ENCODE measurements at regions of chr12 and their contacts with region 1.

Region 1: DNA sequence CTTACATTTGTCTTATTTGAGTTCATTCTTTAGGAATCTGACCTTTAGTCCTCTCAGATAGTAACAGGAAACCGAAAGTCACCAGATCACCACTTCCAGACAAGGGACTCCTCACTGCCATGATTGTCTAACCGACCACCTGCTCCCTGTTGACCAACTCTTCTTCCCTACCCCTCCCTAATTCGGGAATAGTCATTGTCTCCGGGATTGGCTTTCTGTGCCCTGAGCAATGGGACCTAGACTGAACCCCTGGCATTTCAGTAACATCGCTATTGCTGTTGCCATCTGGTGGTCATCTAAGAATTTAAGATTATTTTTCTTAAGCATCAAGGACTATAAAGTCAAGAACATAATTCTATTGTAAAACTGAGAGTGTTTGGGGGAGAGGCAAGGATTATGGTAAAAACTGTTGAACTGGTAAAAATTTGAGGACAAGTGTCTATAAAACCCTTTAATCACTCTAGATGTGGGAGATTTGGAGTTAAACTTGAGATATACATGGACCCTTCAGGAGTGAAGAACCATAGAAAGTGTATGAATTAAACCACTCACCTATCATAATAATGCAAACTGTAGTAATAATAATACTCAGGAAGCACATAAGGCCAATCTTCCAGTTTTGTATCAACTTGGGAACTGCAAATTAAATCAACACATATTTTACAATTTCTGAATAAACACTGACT is 6.3 kb downstream of the CLEC2A start:
- DNase-seq: peak; percentile 69
- ATAC-seq: peak; percentile 47
- H3K4me3 ChIP-seq: peak overlapping the region in 3 of 5 experiments; percentile 18 to 22 (median 21)
- H3K4me3 Mint-ChIP-seq: peak overlapping the region; percentile 56
- H3K27ac ChIP-seq: no peak overlapping the region
- H3K27ac Mint-ChIP-seq: no peak overlapping the region
- H3K4me1 ChIP-seq: no peaks in the 10 kb centered on the region
- H3K4me1 Mint-ChIP-seq: peaks cover 3% of the 10 kb centered on the region
- H3K27me3 ChIP-seq: peaks cover 0 to 4% (median 0%) of the 10 kb centered on the region in 4 experiments
- H3K27me3 Mint-ChIP-seq: peaks cover 21% of the 10 kb centered on the region
- CTCF ChIP-seq: peak; percentile 68

Region 2: GRCh38 chr12:9331218-9331626 is 594.6 kb before region 1 on chr12:
- CTCF ChIA-PET with region 1: interaction called, 3 read pairs
- POLR2A ChIA-PET with region 1: no interaction called
- intact Hi-C with region 1: loop called (anchors 1 kb)
- DNase-seq: peak; percentile 74
- ATAC-seq: peak; percentile 84
- H3K4me3 ChIP-seq: no peak overlapping the region
- H3K4me3 Mint-ChIP-seq: no peak overlapping the region
- H3K27ac ChIP-seq: no peak overlapping the region
- H3K27ac Mint-ChIP-seq: no peak overlapping the region
- H3K4me1 ChIP-seq: peaks cover 0 to 12% of the 10 kb centered on the region in 2 donors
- H3K4me1 Mint-ChIP-seq: peaks cover 7% of the 10 kb centered on the region
- H3K27me3 ChIP-seq: peaks cover 0 to 3% (median 0%) of the 10 kb centered on the region in 4 experiments
- H3K27me3 Mint-ChIP-seq: no peaks in the 10 kb centered on the region
- CTCF ChIP-seq: peak; percentile 98

Region 3: DNA sequence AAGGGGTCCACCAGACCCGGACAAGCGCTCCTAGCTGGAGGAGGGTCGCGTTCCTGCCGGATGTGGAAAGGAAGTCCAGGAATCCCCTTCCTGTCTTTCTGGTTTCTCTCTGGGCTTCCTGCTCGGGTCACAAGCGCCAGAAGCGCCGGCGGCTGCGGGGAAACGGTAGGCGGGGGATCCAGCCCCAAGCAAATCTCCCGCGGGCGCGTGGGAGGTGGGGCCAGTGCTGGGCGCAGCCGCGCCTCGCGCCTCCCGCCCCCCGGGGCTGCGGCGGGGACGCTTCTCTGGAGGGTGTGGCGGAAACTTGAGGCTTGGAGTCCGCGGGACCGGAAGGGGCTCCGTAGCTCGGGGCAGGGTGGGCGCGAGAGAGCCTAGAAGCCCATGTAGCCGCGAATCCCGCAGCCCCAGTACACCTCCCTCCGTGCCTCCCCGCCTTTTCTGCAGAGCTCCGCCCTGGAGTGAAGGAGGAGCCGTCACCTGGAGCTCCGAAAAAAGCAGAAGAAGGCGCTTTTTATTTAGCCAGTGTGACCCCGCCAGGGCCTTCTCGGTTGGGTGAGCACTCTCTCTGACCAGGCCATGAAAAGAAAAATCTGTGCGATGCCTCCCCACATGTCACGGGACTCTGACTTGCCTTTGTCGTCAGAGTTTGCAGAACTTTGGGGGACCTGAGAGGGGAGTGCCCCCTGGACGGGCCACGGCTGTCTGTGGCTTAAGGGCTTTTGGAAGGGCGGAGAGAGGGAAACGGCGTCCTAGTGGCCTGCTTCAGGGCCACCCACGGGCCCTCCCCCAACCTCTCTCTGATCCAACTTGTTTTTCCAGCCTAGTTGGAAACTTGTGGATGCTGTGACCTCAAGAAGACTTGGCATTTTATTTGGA is 277.8 kb before region 1 on chr12:
- CTCF ChIA-PET with region 1: no interaction called
- POLR2A ChIA-PET with region 1: no interaction called
- intact Hi-C with region 1: no loop called
- DNase-seq: peak; percentile 97
- ATAC-seq: peak; percentile 71
- H3K4me3 ChIP-seq: peak overlapping the region; percentile 72 to 99 (median 83)
- H3K4me3 Mint-ChIP-seq: peak overlapping the region; percentile 98
- H3K27ac ChIP-seq: peak overlapping the region; percentile 92 to 98
- H3K27ac Mint-ChIP-seq: peak overlapping the region; percentile 86
- H3K4me1 ChIP-seq: peaks cover 34% of the 10 kb centered on the region in 2 donors
- H3K4me1 Mint-ChIP-seq: peaks cover 52% of the 10 kb centered on the region
- H3K27me3 ChIP-seq: no peaks in the 10 kb centered on the region
- H3K27me3 Mint-ChIP-seq: no peaks in the 10 kb centered on the region
- CTCF ChIP-seq: no peak

Region 4: DNA sequence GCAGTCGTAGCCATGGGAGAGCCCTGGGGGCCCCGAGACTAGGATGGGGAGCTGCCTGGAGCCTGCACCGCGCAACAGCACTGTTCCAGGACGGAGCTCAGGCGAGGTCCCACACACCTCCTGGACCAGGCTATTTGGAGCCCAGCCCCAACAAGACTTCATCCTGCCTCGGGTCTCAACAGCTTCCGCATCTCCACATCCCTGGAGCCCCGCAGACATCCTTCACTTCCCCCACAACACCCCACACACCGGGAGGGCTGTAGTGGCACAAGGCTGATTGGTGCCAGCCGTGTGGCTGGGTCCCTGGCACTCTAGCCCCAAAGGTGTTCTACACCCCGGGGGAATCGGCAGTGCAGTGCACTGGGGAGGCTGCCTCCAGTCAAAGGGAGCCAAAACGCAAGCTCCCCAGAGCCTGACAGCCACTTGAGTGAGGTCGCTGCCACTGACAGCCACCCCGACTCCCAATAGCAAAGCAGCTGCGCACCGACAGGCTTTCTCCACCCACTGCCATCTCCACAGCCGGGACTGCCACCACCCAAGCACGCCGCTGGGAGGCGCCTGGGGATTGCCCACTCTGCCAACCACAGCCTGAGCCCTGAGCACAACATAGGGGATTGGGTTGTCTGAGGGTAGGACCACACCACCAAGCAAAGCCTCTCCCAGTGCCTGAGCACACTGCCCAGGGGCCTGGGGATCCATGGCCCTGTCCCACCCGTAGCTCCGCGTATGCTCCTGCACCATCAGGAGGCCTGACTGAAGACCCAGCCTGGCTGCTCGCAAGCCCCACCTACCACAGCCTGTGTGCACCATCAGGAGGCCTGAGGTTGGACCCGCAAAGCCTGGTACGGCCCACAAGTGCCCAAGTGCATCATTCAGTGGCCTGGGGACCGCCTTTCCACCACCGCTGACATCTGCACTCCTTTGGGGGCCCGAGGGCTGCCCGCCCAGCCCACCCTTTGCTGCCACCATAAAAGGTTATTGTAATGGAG is 111.7 kb before region 1 on chr12:
- CTCF ChIA-PET with region 1: interaction called, 74 read pairs
- POLR2A ChIA-PET with region 1: no interaction called
- intact Hi-C with region 1: loop called (anchors 1 kb)
- DNase-seq: peak; percentile 88
- ATAC-seq: peak; percentile 97
- H3K4me3 ChIP-seq: peak overlapping the region in 4 of 5 experiments; percentile 33 to 63 (median 48)
- H3K4me3 Mint-ChIP-seq: peak overlapping the region; percentile 77
- H3K27ac ChIP-seq: no peak overlapping the region
- H3K27ac Mint-ChIP-seq: no peak overlapping the region
- H3K4me1 ChIP-seq: peaks cover 10 to 23% of the 10 kb centered on the region in 2 donors
- H3K4me1 Mint-ChIP-seq: peaks cover 21% of the 10 kb centered on the region
- H3K27me3 ChIP-seq: peaks cover 0 to 9% (median 0%) of the 10 kb centered on the region in 4 experiments
- H3K27me3 Mint-ChIP-seq: peaks cover 23% of the 10 kb centered on the region
- CTCF ChIP-seq: peak; percentile 93

Region 5: GRCh38 chr12:9869307-9870161 is 56.3 kb before region 1 on chr12 and contains the start of gene CLEC2B:
- CTCF ChIA-PET with region 1: interaction called, 5 read pairs
- POLR2A ChIA-PET with region 1: no interaction called
- intact Hi-C with region 1: loop called (anchors 5 kb)
- DNase-seq: peak; percentile 76
- ATAC-seq: peak; percentile 66
- H3K4me3 ChIP-seq: peak within 1 kb of the TSS; percentile 51 to 97 (median 66)
- H3K4me3 Mint-ChIP-seq: peak within 1 kb of the TSS; percentile 92
- H3K27ac ChIP-seq: peak within 1 kb of the TSS; percentile 89 to 90
- H3K27ac Mint-ChIP-seq: peak within 1 kb of the TSS; percentile 99
- H3K4me1 ChIP-seq: peaks cover 14 to 18% of the 10 kb centered on the region in 2 donors
- H3K4me1 Mint-ChIP-seq: peaks cover 41% of the 10 kb centered on the region
- H3K27me3 ChIP-seq: no peaks in the 10 kb centered on the region
- H3K27me3 Mint-ChIP-seq: no peaks in the 10 kb centered on the region
- CTCF ChIP-seq: no peak
- total RNA-seq, gene CLEC2B: 30.5 and 31.6 TPM in 2 replicates

Region 6: GRCh38 chr12:9883175-9883574 is 42.7 kb before region 1 on chr12:
- CTCF ChIA-PET with region 1: no interaction called
- POLR2A ChIA-PET with region 1: no interaction called
- intact Hi-C with region 1: loop called (anchors 2 kb)
- DNase-seq: no peak
- ATAC-seq: no peak
- H3K4me3 ChIP-seq: no peak overlapping the region
- H3K4me3 Mint-ChIP-seq: no peak overlapping the region
- H3K27ac ChIP-seq: no peak overlapping the region
- H3K27ac Mint-ChIP-seq: no peak overlapping the region
- H3K4me1 ChIP-seq: peaks cover 0 to 10% of the 10 kb centered on the region in 2 donors
- H3K4me1 Mint-ChIP-seq: peaks cover 6% of the 10 kb centered on the region
- H3K27me3 ChIP-seq: no peaks in the 10 kb centered on the region
- H3K27me3 Mint-ChIP-seq: no peaks in the 10 kb centered on the region
- CTCF ChIP-seq: no peak

Region 7: GRCh38 chr12:9940375-9940774 is 14.5 kb after region 1 on chr12:
- CTCF ChIA-PET with region 1: interaction called, 10 read pairs
- POLR2A ChIA-PET with region 1: no interaction called
- intact Hi-C with region 1: no loop called
- DNase-seq: peak; percentile 42
- ATAC-seq: no peak
- H3K4me3 ChIP-seq: no peak overlapping the region
- H3K4me3 Mint-ChIP-seq: no peak overlapping the region
- H3K27ac ChIP-seq: no peak overlapping the region
- H3K27ac Mint-ChIP-seq: no peak overlapping the region
- H3K4me1 ChIP-seq: peaks cover 11 to 24% of the 10 kb centered on the region in 2 donors
- H3K4me1 Mint-ChIP-seq: peaks cover 20% of the 10 kb centered on the region
- H3K27me3 ChIP-seq: peaks cover 0 to 7% (median 0%) of the 10 kb centered on the region in 4 experiments
- H3K27me3 Mint-ChIP-seq: peaks cover 22% of the 10 kb centered on the region
- CTCF ChIP-seq: peak; percentile 44

Region 8: GRCh38 chr12:10310926-10311720 is 385.3 kb after region 1 on chr12:
- CTCF ChIA-PET with region 1: no interaction called
- POLR2A ChIA-PET with region 1: no interaction called
- intact Hi-C with region 1: no loop called
- DNase-seq: no peak
- ATAC-seq: no peak
- H3K4me3 ChIP-seq: no peak overlapping the region
- H3K4me3 Mint-ChIP-seq: no peak overlapping the region
- H3K27ac ChIP-seq: no peak overlapping the region
- H3K27ac Mint-ChIP-seq: no peak overlapping the region
- H3K4me1 ChIP-seq: no peaks in the 10 kb centered on the region
- H3K4me1 Mint-ChIP-seq: no peaks in the 10 kb centered on the region
- H3K27me3 ChIP-seq: no peaks in the 10 kb centered on the region
- H3K27me3 Mint-ChIP-seq: no peaks in the 10 kb centered on the region
- CTCF ChIP-seq: no peak

Region 9: DNA sequence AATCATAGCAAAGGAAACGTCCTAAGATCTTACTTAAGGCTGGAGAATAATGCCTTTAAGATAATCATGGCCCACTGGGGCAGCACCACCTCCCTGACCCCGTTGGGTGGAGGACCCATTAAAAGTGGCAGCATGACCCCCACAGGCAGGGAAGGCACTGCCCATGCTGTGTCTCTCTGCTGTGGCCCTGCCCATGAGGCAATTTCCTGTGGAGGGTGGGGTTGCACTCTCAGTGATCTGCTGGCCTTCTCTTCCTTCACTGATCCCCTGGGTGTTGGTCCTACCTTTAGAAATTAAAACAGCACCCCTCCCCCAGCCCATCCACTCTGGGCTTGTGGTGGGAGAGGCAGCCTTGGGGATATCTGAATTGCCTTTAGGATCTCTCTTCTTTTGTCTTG is 446.7 kb after region 1 on chr12:
- CTCF ChIA-PET with region 1: no interaction called
- POLR2A ChIA-PET with region 1: no interaction called
- intact Hi-C with region 1: no loop called
- DNase-seq: no peak
- ATAC-seq: no peak
- H3K4me3 ChIP-seq: no peak overlapping the region
- H3K4me3 Mint-ChIP-seq: no peak overlapping the region
- H3K27ac ChIP-seq: peak overlapping the region in 1 of 2 donors; percentile 47
- H3K27ac Mint-ChIP-seq: no peak overlapping the region
- H3K4me1 ChIP-seq: peaks cover 8 to 15% of the 10 kb centered on the region in 2 donors
- H3K4me1 Mint-ChIP-seq: peaks cover 12% of the 10 kb centered on the region
- H3K27me3 ChIP-seq: no peaks in the 10 kb centered on the region
- H3K27me3 Mint-ChIP-seq: no peaks in the 10 kb centered on the region
- CTCF ChIP-seq: no peak